Heart left ventricle (tissue), 16 donors: ENCODE measurements at regions of chr9 and their contacts with region 1.

Region 1: GRCh38 chr9:131747356-131747755 is 7.5 kb upstream of the RAPGEF1 start:
- DNase-seq: no peak
- ATAC-seq: peak in 3 of 4 donors; percentile 42 to 55 (median 45)
- H3K4me3 ChIP-seq: no peak overlapping the region
- H3K27ac ChIP-seq: no peak overlapping the region
- H3K4me1 ChIP-seq: peaks cover 0 to 19% (median 1%) of the 10 kb centered on the region in 12 donors
- H3K27me3 ChIP-seq: no peaks in the 10 kb centered on the region
- CTCF ChIP-seq: peak; percentile 48 to 70 (median 60)
- POLR2A ChIP-seq: no peak

Region 2: GRCh38 chr9:131349881-131350563 is 397.3 kb before region 1 on chr9:
- intact Hi-C with region 1: loop called in 7 of 10 experiments (anchors 2 to 10 kb)
- DNase-seq: peak; percentile 87 to 96 (median 92)
- ATAC-seq: peak; percentile 87 to 97 (median 96)
- H3K4me3 ChIP-seq: peak overlapping the region in 10 of 12 donors; percentile 8 to 49 (median 33)
- H3K27ac ChIP-seq: peak overlapping the region in 1 of 12 donors; percentile 3
- H3K4me1 ChIP-seq: peaks cover 0 to 16% (median 8%) of the 10 kb centered on the region in 12 donors
- H3K27me3 ChIP-seq: no peaks in the 10 kb centered on the region
- CTCF ChIP-seq: peak; percentile 77 to 95 (median 88)
- POLR2A ChIP-seq: no peak

Region 3: DNA sequence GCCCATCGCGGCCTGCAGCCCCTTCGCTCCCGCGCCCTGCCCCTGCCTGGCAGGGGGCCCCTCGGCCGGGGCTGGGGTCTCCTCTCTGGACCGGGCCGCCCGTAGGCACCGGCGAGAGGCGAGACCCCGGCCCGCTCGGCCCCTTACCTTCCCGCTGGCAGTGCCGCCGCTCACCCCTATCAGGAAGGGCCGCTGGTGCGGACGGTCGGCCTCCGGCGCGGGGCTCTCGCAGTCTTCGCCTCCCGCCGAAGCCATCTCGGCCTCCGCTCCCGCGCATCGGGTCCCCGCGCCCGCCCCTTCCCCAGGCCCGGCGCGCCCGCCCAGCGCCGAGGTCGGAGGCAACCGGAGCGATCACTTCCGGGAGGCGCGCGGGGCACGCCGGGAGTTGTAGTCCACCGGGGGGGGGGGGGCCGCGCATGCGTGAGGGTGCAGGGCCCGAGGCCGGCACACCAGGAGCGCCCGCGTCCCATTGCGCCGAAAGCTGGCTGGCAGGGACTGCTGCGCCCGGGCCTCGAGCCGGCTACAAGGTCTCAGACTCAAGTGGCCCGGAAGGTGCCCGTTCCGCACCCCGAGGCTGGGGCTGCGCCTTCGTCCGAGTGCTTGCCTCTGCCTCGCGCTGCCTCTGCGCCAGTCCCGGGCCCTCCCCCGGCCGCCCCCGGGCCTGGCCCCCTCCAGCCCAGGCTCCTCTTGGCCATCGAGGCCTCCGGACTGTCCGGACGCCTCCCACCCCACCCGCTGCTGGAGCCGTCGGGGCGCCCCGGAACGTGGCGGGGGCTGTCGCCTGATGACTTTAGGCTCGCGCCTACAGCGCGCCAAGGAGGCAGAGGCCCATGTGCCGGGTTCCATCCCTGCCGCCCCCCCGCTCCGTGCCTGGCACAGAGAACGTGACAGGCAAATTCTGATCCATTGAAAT is 216.2 kb before region 1 on chr9 and contains the start of gene UCK1:
- intact Hi-C with region 1: loop called in 4 of 10 experiments (anchors 2 to 10 kb)
- DNase-seq: peak; percentile 82 to 93 (median 85)
- ATAC-seq: peak; percentile 86 to 98 (median 98)
- H3K4me3 ChIP-seq: peak within 1 kb of the TSS; percentile 71 to 100 (median 96)
- H3K27ac ChIP-seq: peak within 1 kb of the TSS; percentile 20 to 96 (median 86)
- H3K4me1 ChIP-seq: peaks cover 3 to 20% (median 11%) of the 10 kb centered on the region in 12 donors
- H3K27me3 ChIP-seq: no peaks in the 10 kb centered on the region
- CTCF ChIP-seq: peak in 4 of 12 donors; percentile 1 to 22 (median 4)
- POLR2A ChIP-seq: peak in 1 of 2 donors; percentile 77
- total RNA-seq, gene UCK1: 16.4 to 45.1 (median 24.9) TPM

Region 4: DNA sequence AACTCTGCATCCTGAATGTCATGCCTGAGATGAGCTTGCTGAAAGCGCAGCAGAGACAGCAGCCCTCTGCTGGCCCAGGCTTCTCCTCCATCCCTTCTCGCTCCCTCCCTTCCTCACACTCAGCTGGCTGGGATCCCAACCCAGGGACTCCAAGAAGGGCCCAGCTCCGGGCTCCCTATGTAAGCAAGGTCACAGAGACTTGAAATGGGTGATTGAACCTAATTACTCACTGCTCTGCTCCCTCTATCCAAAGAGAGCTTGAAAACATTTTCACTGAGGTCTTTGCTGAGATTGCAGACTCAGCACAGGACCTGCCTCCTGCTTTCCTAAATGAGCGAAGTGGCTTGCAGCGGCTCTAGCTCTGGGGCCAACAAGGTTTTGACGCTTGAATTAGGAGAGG is 50.3 kb before region 1 on chr9:
- intact Hi-C with region 1: no loop called
- DNase-seq: peak in 2 of 5 donors; percentile 55 to 72
- ATAC-seq: peak; percentile 24 to 62 (median 34)
- H3K4me3 ChIP-seq: no peak overlapping the region
- H3K27ac ChIP-seq: peak overlapping the region in 10 of 12 donors; percentile 47 to 93 (median 80)
- H3K4me1 ChIP-seq: peaks cover 11 to 99% (median 79%) of the 10 kb centered on the region in 12 donors
- H3K27me3 ChIP-seq: no peaks in the 10 kb centered on the region
- CTCF ChIP-seq: peak in 5 of 12 donors; percentile 11 to 42 (median 27)
- POLR2A ChIP-seq: no peak

Region 5: GRCh38 chr9:131788341-131788740 is 41.0 kb after region 1 on chr9:
- intact Hi-C with region 1: no loop called
- DNase-seq: no peak
- ATAC-seq: no peak
- H3K4me3 ChIP-seq: no peak overlapping the region
- H3K27ac ChIP-seq: no peak overlapping the region
- H3K4me1 ChIP-seq: no peaks in the 10 kb centered on the region
- H3K27me3 ChIP-seq: peaks cover 0 to 72% (median 10%) of the 10 kb centered on the region in 9 donors
- CTCF ChIP-seq: no peak
- POLR2A ChIP-seq: no peak